ENCODE measurements at regions of chr6 and their contacts with region 1.

Region 1: GRCh38 chr6:41424370-41425058 is 89.1 kb downstream of the NCR2 start:
- DNase-seq: peak; percentile 92

Region 2: DNA sequence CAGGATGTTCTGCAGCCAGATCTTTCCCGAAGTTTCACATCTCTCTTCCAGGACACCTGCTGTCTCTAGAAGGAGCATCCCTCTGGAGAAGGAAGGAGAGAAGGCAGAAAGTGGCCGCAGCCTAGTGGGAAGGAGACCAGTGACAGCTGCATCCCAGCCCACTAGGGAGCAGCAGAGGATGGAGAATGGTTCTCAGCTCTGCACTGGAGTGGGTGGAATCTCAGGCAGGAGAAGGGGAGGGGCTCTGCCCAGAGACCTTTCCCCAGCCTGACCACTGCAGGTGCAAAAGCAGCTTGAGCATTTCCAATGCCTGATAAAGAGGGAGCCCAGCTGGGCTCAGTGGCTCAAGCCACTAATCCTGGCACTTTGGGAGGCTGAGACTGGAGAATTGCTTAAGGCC is 56.8 kb before region 1 on chr6:
- intact Hi-C with region 1: loop called in 1 of 2 experiments (anchors 5 kb)
- DNase-seq: no peak

Region 3: GRCh38 chr6:41399424-41399823 is 25.1 kb before region 1 on chr6:
- intact Hi-C with region 1: loop called in 1 of 2 experiments (anchors 1 kb)
- DNase-seq: no peak

Region 4: DNA sequence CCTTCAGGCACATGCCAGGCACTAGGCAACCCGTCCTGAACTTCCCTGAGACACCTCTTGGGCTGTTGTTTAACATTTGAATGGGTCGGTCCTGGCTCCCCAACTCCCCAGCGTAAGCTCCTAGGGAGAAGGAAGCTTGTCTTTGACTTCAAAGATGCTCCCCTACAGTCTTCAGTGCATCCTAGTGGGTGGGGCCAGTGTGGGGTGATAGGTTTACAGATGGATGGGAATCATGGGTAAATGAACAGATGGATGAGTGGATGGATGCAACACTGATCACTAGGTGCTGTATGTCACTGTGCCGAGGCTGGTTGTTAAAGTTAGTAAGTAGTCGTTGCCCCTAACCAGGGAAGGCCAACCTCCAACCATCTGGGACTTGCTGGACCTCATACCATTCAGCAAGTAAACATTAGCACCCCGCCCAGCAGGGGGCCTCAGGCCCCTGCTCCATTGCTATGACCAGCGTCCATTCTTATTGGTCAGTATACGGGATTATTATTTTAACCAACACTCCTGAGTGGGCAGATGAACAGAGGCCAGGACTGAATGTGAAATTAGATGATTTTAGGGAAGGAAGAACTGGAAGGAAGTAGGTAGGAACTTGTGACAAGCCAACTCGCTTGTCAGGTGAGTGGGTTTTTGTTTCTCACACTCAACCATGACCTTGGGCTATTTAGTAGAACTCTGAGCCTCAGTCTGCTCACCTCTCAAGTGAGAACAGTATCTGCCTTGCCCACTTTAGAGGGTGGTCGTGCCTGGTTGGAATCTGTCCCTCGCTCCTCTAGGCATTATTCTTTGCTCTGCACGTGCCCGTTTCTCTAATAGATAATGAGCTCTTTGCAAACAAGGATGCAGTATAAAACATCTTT is 38.8 kb after region 1 on chr6:
- intact Hi-C with region 1: loop called in 1 of 2 experiments (anchors 5 kb)
- DNase-seq: peak; percentile 87

Region 5: GRCh38 chr6:41581381-41581991 is 157.0 kb after region 1 on chr6:
- intact Hi-C with region 1: loop called in 1 of 2 experiments (anchors 10 kb)
- DNase-seq: no peak

Region 6: DNA sequence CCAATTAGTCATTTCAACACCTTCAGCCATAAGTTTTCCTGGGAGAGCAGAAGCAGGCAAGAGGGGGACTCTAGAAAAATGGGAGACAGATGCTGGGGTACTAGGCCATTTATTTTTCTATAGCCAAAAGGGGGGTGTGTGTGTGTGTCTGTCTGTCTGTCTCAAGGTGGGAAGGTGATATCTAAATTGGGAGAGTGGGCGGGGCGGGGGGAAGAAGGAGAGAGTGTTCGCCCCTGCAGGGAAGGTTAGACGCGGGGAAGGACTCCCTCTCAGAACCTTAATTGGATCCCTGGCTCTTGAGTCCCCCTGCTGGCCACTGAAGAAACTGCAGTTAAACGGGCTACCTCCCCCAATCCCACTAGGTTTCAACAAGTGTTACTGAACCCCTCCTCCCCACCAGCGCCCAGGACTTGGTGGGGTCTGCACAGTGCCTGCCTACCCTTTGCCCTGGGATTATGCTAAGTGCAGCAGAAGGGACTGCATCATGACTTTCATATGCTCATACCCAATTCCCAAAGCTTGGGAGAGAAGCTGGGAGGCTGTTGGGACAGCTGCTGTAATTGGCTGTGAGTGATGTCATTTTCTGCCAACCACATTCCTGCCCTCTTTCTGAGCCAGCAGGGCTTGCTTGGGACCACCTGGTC is 167.5 kb after region 1 on chr6:
- intact Hi-C with region 1: loop called (anchors 2 to 10 kb)
- DNase-seq: peak; percentile 89

Region 7: GRCh38 chr6:41683510-41684310 is 259.2 kb after region 1 on chr6:
- intact Hi-C with region 1: loop called in 1 of 2 experiments (anchors 5 kb)
- DNase-seq: peak; percentile 95